ENCODE measurements at regions of chr1 and their contacts with region 1.

Region 1: DNA sequence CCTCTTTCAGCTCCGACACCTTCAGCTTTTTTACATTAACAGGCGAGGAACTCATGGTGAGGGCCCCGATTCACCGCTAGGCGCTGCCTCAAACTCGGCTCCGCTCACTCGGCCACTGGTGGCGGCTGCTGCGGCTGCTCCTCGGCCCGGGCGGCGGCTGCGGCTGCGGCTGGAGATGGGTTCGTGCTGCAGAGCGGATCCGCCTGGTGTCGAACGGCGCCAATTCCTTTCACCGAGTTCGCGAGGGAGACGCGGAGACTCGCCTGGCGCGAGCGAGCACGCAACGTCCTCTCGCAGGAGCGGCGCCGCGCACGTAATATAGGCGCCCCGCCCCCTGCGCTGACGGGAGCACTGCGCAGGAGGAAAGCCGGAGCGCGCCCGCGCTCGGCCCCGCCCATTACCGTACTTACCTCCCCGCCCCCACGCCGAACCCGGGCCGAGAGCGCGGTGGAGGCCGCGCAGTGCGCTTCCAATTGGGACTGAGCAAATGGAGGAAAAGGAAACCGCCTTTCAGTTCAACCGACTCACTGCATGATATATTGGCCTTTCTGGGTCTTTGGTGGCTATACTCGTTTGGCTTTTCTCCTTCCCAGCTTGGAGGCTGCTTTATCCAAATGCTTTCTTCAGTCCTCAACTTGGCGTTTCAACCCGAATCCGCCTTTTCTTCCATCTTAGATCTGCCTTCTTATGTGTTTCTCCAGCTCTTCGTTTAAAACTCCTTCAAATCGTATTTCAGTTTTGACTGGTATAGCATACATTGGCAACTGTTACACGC is at the start of gene HNRNPU:
- DNase-seq: peak; percentile 97
- H3K4me3 ChIP-seq: peak within 1 kb of the TSS; percentile 91 to 95
- H3K27ac ChIP-seq: peak within 1 kb of the TSS; percentile 100
- H3K4me1 ChIP-seq: peaks cover 4% of the 10 kb centered on the region
- H3K27me3 ChIP-seq: no peaks in the 10 kb centered on the region
- CTCF ChIP-seq: peak in 2 of 4 experiments; percentile 18 to 62
- POLR2A ChIP-seq: peak; percentile 100
- total RNA-seq, gene HNRNPU: 302 to 350 TPM

Region 2: DNA sequence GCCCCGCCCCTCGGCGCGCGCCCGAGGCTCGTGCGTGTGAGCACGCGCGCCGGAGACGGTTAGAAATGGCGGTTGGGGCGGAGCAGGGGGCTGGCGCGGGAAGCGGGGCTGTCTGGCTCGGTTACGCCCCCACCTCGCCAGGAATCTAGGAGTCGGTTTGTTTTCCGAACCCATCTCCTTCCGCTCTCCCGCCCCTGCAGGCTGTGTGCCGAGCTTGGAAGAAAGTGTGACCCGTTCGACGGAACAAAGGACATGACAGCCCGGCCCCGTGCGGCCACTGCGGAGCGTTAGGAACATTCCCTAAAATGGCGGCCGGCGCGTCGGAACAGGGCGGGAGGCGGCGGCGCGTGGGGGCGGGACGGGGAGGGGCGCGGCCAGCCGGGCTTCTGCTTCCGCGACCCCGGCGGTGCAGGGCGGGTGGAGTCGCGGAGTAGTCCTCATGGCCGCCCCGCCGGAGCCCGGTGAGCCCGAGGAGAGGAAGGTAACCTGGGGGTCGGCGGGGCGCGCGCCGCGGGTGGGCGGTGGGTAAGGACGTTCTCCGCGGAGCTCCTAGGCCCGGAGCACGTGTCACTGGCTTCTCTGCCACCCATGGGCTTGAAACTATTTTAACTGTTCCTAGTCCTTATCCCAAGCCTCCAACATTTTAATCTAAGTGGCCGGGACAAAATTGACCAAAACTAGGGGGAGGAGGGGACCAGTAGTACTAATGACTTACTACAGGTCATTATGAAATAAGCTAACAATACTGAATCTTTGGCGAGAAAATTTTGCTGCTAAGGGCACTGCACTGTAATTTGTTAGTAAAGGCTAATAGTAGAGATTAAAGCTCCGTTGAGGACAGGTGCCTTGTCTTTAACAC is 28.9 kb before region 1 on chr1 and contains the start of gene COX20:
- intact Hi-C with region 1: loop called (anchors 1 kb)
- DNase-seq: peak; percentile 88
- H3K4me3 ChIP-seq: peak within 1 kb of the TSS; percentile 64 to 87
- H3K27ac ChIP-seq: peak within 1 kb of the TSS; percentile 99
- H3K4me1 ChIP-seq: peaks cover 4% of the 10 kb centered on the region
- H3K27me3 ChIP-seq: no peaks in the 10 kb centered on the region
- CTCF ChIP-seq: peak in 2 of 4 experiments; percentile 15 to 36
- POLR2A ChIP-seq: peak; percentile 49
- total RNA-seq, gene COX20: 46.8 to 78.4 TPM

Region 3: DNA sequence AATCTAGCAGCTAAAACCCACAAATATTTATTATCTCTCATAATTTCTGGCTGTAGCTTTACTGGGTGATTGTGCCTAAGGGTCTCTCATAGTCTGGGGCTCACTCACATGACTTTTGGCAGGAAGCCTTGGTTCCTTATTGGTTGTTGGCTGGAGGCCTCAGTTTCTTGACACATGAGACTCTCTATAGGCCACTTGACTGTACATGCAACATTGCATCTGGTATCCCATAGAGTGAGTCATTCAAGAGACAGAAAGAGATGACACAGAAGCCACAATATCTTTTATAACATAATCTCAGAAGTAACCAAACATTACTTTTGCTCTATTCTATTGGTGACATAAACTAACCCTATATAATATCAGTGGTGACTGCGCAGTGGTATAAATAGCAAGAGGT is 128.4 kb after region 1 on chr1:
- intact Hi-C with region 1: no loop called
- DNase-seq: no peak
- H3K4me3 ChIP-seq: no peak overlapping the region
- H3K27ac ChIP-seq: no peak overlapping the region
- H3K4me1 ChIP-seq: no peaks in the 10 kb centered on the region
- H3K27me3 ChIP-seq: no peaks in the 10 kb centered on the region
- CTCF ChIP-seq: no peak
- POLR2A ChIP-seq: no peak